PC-9 (cell line): ENCODE measurements at regions of chr1 and their contacts with region 1.

Region 1: GRCh38 chr1:173429471-173430402 is 47.4 kb upstream of the PRDX6 start:
- DNase-seq: peak; percentile 69 to 85
- H3K4me3 ChIP-seq: peak overlapping the region; percentile 42
- H3K27ac ChIP-seq: peak overlapping the region; percentile 76
- H3K4me1 ChIP-seq: peaks cover 68% of the 10 kb centered on the region
- H3K27me3 ChIP-seq: no peaks in the 10 kb centered on the region
- CTCF ChIP-seq: no peak

Region 2: DNA sequence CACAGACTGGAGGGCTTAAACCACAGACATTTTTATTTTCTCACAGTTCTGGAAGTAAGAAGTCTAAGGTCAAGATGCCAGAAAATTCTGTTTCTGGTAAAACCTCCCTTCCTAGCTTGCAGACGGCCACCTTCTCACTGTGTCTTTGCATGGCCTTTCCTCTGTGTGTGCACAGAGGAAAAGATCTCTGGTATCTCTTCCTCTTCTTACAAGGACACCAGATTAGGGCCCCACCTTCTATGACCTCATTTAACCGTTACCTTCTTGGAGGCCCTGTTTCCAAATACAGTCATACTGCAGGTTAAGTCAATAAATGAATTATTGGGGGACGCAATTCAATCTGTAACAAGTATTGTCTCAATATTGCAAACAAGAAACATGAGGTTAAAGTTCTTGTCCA is 15.6 kb before region 1 on chr1:
- CTCF ChIA-PET with region 1: no interaction called
- POLR2A ChIA-PET with region 1: no interaction called
- intact Hi-C with region 1: no loop called
- DNase-seq: no peak
- H3K4me3 ChIP-seq: no peak overlapping the region
- H3K27ac ChIP-seq: no peak overlapping the region
- H3K4me1 ChIP-seq: peaks cover 6% of the 10 kb centered on the region; the same call in 1 of the 2 replicates
- H3K27me3 ChIP-seq: no peaks in the 10 kb centered on the region
- CTCF ChIP-seq: no peak

Region 3: GRCh38 chr1:173476664-173477285 is 47.0 kb after region 1 on chr1:
- CTCF ChIA-PET with region 1: interaction called, 3 read pairs
- POLR2A ChIA-PET with region 1: interaction called, 5 read pairs
- intact Hi-C with region 1: loop called (anchors 1 kb)
- DNase-seq: peak; percentile 87 to 90
- H3K4me3 ChIP-seq: peak overlapping the region; percentile 99
- H3K27ac ChIP-seq: peak overlapping the region; percentile 74
- H3K4me1 ChIP-seq: peaks cover 50% of the 10 kb centered on the region
- H3K27me3 ChIP-seq: no peaks in the 10 kb centered on the region
- CTCF ChIP-seq: 0 out of 2 replicates have a peak, but pooled peaks have one; percentile 21

Region 4: GRCh38 chr1:173824331-173825081 is 394.8 kb after region 1 on chr1 and contains the starts of genes CENPL and DARS2:
- CTCF ChIA-PET with region 1: interaction called, 7 read pairs
- POLR2A ChIA-PET with region 1: interaction called, 5 read pairs
- intact Hi-C with region 1: loop called (anchors 1 kb)
- DNase-seq: peak; percentile 86 to 90
- H3K4me3 ChIP-seq: peak within 1 kb of the TSS; percentile 84
- H3K27ac ChIP-seq: peak within 1 kb of the TSS; percentile 95
- H3K4me1 ChIP-seq: peaks cover 17% of the 10 kb centered on the region
- H3K27me3 ChIP-seq: no peaks in the 10 kb centered on the region
- CTCF ChIP-seq: no peak
- total RNA-seq, gene CENPL: 14.4 and 19.5 TPM in 2 replicates
- total RNA-seq, gene DARS2: 15.0 and 18.3 TPM in 2 replicates

Region 5: GRCh38 chr1:174217787-174218574 is 788.2 kb after region 1 on chr1:
- CTCF ChIA-PET with region 1: no interaction called
- POLR2A ChIA-PET with region 1: no interaction called
- intact Hi-C with region 1: loop called (anchors 5 kb)
- DNase-seq: no peak
- H3K4me3 ChIP-seq: no peak overlapping the region
- H3K27ac ChIP-seq: no peak overlapping the region
- H3K4me1 ChIP-seq: 0 out of 2 replicates have a peak, but pooled peaks cover 5% of the 10 kb centered on the region
- H3K27me3 ChIP-seq: no peaks in the 10 kb centered on the region
- CTCF ChIP-seq: peak; percentile 87